ENCODE measurements at regions of chr6 and their contacts with region 1.

Region 1: GRCh38 chr6:105136431-105137350 is 43.1 kb downstream of the POPDC3 start:
- DNase-seq: peak; percentile 75 to 92
- ATAC-seq: peak; percentile 85 to 88 (median 86)
- H3K4me3 ChIP-seq: peak overlapping the region; percentile 84
- H3K27ac ChIP-seq: peak overlapping the region; percentile 97
- H3K4me1 ChIP-seq: peaks cover 38% of the 10 kb centered on the region
- H3K27me3 ChIP-seq: no peaks in the 10 kb centered on the region
- CTCF ChIP-seq: peak; percentile 21

Region 2: GRCh38 chr6:105005451-105005850 is 131.2 kb before region 1 on chr6:
- intact Hi-C with region 1: no loop called
- DNase-seq: no peak
- ATAC-seq: no peak
- H3K4me3 ChIP-seq: no peak overlapping the region
- H3K27ac ChIP-seq: no peak overlapping the region
- H3K4me1 ChIP-seq: no peaks in the 10 kb centered on the region
- H3K27me3 ChIP-seq: no peaks in the 10 kb centered on the region
- CTCF ChIP-seq: no peak

Region 3: DNA sequence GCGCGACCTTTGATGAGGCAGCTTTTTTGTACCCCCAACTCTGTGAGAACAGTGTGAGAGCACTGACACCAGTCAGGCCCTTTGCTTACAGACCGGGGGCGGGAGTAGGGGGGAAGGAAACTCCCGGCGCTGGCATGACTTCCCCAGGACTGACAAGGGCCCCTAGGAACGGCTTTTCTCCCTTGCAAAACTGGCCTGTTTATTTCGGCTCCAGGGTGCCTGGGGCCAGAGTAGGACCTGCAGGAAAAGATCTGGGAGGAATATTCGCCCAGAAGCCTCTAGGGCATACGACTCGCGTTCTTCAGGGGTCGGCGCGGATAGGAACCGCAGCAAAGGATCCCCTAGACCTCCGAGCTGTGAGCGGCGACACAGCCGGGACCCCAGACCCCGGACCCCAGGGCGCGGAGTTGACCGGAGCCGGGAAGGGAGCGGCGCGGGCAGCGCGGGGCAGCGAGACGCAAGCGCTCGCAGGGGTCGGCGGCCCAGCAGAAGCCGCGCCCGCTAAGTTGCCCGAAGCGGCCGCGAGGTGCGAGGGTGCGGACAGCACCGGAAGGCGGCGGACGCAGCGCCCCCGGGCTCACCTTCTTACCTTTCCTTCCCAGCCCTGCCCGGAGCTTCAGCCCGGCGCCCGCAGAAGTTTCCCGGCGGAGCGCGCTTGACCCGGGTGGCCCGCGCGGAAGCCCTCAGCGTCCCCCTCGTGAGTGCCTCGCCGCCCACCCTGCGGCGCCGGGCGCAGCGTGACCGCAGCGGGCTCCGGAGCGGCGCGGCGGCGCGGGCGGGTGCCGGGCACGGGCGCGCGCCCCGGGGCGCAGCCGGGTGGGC is 42.8 kb after region 1 on chr6 and contains the start of gene POPDC3:
- intact Hi-C with region 1: loop called in 1 of 2 experiments (anchors 5 kb)
- DNase-seq: peak; percentile 39 to 77
- ATAC-seq: peak; percentile 71 to 80 (median 74)
- H3K4me3 ChIP-seq: peak within 1 kb of the TSS; percentile 87
- H3K27ac ChIP-seq: peak within 1 kb of the TSS; percentile 99
- H3K4me1 ChIP-seq: peaks cover 22% of the 10 kb centered on the region
- H3K27me3 ChIP-seq: no peaks in the 10 kb centered on the region
- CTCF ChIP-seq: no peak
- total RNA-seq, gene POPDC3: 80.1 to 170 (median 103) TPM

Region 4: GRCh38 chr6:105301072-105301503 is 164.4 kb after region 1 on chr6:
- intact Hi-C with region 1: loop called in 1 of 2 experiments (anchors 5 kb)
- DNase-seq: no peak
- ATAC-seq: peak; percentile 74 to 92 (median 81)
- H3K4me3 ChIP-seq: peak overlapping the region; percentile 3
- H3K27ac ChIP-seq: peak overlapping the region; percentile 69
- H3K4me1 ChIP-seq: peaks cover 32% of the 10 kb centered on the region
- H3K27me3 ChIP-seq: no peaks in the 10 kb centered on the region
- CTCF ChIP-seq: no peak

Region 5: GRCh38 chr6:105363100-105363754 is 226.5 kb after region 1 on chr6:
- intact Hi-C with region 1: loop called in 1 of 2 experiments (anchors 5 kb)
- DNase-seq: no peak
- ATAC-seq: peak in 3 of 4 donors; percentile 53 to 76 (median 64)
- H3K4me3 ChIP-seq: no peak overlapping the region
- H3K27ac ChIP-seq: peak overlapping the region; percentile 72
- H3K4me1 ChIP-seq: peaks cover 29% of the 10 kb centered on the region
- H3K27me3 ChIP-seq: no peaks in the 10 kb centered on the region
- CTCF ChIP-seq: peak; percentile 36

Region 6: GRCh38 chr6:105402939-105403935 is 266.5 kb after region 1 on chr6 and contains the start of gene PREP:
- intact Hi-C with region 1: loop called in 1 of 2 experiments (anchors 5 kb)
- DNase-seq: peak; percentile 88 to 93
- ATAC-seq: peak; percentile 93 to 96 (median 94)
- H3K4me3 ChIP-seq: peak within 1 kb of the TSS; percentile 97
- H3K27ac ChIP-seq: peak within 1 kb of the TSS; percentile 95
- H3K4me1 ChIP-seq: peaks cover 41% of the 10 kb centered on the region
- H3K27me3 ChIP-seq: no peaks in the 10 kb centered on the region
- CTCF ChIP-seq: peak; percentile 78
- total RNA-seq, gene PREP: 44.7 to 67.0 (median 55.0) TPM

Measured in psoas muscle (tissue), 8 donors.